Cardiac septum (tissue), 1 donor: ENCODE measurements at regions of chr11 and their contacts with region 1.

Region 1: DNA sequence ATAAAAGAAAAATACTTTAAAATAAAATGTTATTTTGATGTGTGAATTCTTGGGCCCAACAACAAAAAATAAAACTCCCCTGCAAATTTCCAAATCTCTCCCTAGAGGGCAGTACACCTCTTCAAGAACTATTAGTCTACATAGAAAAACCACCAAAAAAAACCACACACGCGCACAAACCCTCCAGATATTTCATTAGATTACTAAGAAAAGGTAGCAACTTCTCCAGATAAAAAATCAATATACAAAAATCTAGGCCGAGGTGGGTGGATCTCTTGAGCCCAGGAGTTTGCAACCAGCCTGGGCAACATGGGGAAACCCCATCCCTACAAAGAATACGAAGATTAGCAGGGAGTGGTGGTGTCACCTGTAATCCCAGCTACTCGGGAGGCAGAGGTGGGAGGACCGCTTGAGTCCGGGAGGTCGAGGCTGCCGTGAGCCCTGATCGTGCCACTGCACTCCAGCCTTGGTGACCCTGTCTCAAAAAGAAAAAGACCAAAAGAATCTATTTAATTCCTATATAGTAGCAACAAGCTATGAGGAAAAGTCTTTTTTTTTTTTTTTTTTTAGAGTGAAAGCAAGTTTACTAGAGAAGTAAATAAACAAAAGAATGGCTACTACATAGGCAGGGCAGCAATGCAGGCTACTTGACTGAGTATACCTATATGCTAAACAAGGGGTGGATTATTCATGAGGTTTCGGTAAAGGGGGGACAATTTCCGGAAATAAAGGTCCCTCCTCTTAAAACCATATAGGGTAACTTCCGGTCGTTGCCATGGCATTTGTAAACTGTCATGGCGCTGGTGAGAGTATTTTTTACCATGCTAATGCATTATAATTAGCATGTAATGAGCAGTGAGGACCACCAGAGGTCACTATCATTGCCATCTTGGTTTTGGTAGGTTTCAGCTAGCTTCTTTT is 13.1 kb downstream of the B3GNT6 start:
- DNase-seq: peak; percentile 64

Region 2: DNA sequence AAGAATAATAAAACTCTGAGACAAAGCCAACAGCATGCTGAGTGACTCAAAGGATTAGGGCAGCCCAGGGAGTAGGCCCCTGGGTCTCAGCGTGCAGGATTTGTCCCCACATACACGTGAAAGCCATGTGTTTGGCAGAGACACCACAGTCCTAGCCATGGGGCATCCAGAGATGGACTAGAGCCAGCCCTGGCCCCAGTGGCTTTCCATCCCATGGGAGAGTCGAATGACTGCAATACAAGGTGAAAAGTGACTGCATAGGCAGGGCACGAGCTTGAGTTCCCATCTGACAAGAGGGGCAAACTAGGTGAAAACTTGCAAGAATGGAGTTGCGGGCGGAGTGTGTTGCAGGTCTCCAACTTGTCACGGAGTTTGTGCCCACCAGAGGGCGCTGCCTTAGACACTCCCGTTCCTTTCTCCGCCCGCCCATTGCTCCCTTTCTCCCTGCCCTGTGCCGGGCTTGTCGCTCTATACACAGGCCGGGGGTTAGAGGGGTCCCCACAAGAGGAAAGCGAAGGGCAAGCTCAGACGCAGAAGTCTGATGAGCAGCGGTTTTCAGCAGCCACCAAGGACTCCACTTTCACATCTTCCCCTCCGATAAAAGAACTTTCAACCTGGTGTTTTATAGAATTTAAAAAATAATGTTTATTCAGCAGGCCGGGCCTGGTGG is 239.9 kb before region 1 on chr11:
- intact Hi-C with region 1: loop called (anchors 5 kb)
- DNase-seq: peak; percentile 87

Region 3: GRCh38 chr11:77091146-77091940 is 44.1 kb after region 1 on chr11:
- intact Hi-C with region 1: loop called (anchors 1 kb)
- DNase-seq: no peak